ENCODE measurements at regions of chr10 and their contacts with region 1.

Region 1: DNA sequence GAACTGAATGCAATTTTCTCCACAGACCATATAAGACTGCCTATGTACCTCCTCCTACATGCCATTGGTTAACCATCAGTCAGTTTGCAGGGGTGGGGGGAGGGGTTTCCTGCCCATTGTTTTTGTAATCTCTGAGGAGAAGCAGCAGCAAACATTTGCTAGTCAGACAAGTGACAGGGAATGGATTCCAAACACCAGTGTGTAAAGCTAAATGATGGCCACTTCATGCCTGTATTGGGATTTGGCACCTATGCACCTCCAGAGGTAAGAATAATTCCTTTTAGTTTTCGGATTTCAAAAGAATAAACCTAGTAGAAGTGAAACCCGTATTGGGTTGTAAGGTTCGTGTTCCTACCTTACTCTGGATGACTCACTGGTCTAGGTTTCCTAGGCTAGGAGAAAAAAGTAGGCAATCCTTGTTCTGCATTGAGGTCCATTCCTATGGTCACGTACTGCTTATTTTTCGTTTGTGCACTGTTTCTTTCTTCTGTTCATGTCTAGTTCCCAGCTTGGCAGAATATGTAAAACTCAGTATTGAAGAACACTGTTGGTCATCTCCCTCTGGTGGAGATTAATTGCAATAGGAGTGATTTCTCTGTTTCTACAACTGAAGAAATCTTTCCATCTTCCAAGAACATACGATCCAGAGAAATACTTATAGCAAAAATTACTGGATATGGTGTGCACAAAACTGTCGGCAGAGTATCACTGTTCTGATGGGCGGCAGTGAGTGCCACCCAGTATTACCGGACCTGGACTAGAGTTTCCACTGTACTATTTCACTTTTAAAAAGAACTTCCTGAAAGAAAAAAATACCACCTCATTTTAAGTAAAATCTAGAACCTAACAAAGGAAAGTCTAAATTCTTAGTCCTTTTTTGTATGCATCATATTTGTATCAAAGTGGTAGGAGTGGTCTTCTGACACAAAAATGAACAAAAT is at the start of gene AKR1C3:
- DNase-seq: peak; percentile 37 to 74
- H3K4me3 ChIP-seq: peak within 1 kb of the TSS; percentile 97
- H3K27ac ChIP-seq: peak within 1 kb of the TSS; percentile 99
- H3K4me1 ChIP-seq: peaks cover 34% of the 10 kb centered on the region
- H3K27me3 ChIP-seq: no peaks in the 10 kb centered on the region; the same call in 1 of the 2 replicates
- CTCF ChIP-seq: peak; percentile 81
- total RNA-seq, gene AKR1C3: 1,870 and 1,886 TPM in 2 replicates

Region 2: GRCh38 chr10:4770801-4771553 is 323.6 kb before region 1 on chr10:
- CTCF ChIA-PET with region 1: no interaction called
- POLR2A ChIA-PET with region 1: no interaction called
- intact Hi-C with region 1: no loop called
- DNase-seq: peak; percentile 7 to 86
- H3K4me3 ChIP-seq: no peak overlapping the region
- H3K27ac ChIP-seq: peak overlapping the region; percentile 92
- H3K4me1 ChIP-seq: peaks cover 19% of the 10 kb centered on the region
- H3K27me3 ChIP-seq: no peaks in the 10 kb centered on the region
- CTCF ChIP-seq: peak; percentile 67

Region 3: GRCh38 chr10:5071411-5072198 is 22.9 kb before region 1 on chr10:
- CTCF ChIA-PET with region 1: no interaction called
- POLR2A ChIA-PET with region 1: no interaction called
- intact Hi-C with region 1: loop called (anchors 1 kb)
- DNase-seq: peak; percentile 74 to 85
- H3K4me3 ChIP-seq: peak overlapping the region; percentile 38; the same call in 1 of the 2 replicates
- H3K27ac ChIP-seq: peak overlapping the region; percentile 99
- H3K4me1 ChIP-seq: peaks cover 50% of the 10 kb centered on the region
- H3K27me3 ChIP-seq: no peaks in the 10 kb centered on the region
- CTCF ChIP-seq: no peak

Region 4: DNA sequence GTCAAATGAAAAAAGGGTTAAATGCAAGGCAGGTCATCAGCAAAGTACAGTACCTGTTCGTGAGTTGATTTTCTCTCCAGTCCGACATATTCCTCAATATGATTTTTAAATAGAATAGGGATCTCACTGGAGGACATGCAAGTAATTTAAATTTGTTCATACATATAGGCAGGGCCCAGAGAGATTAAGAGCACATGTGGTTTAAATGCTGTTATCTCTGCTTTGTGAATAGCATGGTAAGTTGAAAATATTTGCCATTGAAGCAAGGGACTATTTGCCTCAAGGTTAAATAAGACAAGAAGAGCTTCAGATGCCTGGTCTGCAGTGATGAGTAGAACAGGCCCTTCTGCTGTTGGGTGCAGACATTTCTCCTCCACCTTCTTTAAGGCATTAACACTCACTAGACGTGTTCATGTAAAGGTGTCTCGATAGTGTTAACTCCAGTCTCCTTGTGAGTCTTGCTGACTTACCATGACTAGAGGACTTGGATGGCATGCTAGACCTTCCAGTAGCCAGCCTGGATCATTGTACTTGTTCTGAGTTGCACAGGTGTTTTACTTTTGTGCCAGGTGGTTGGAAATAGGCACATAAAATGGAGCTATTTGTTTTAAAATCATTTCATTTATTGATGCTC is 15.9 kb before region 1 on chr10:
- CTCF ChIA-PET with region 1: no interaction called
- POLR2A ChIA-PET with region 1: interaction called, 8 read pairs
- intact Hi-C with region 1: loop called (anchors 1 kb)
- DNase-seq: peak; percentile 66 to 88
- H3K4me3 ChIP-seq: peak overlapping the region; percentile 29; the same call in 1 of the 2 replicates
- H3K27ac ChIP-seq: peak overlapping the region; percentile 99
- H3K4me1 ChIP-seq: peaks cover 60% of the 10 kb centered on the region
- H3K27me3 ChIP-seq: no peaks in the 10 kb centered on the region
- CTCF ChIP-seq: no peak

Region 5: GRCh38 chr10:5165738-5166137 is 71.2 kb after region 1 on chr10:
- CTCF ChIA-PET with region 1: interaction called, 10 read pairs
- POLR2A ChIA-PET with region 1: no interaction called
- intact Hi-C with region 1: no loop called
- DNase-seq: no peak
- H3K4me3 ChIP-seq: no peak overlapping the region
- H3K27ac ChIP-seq: no peak overlapping the region
- H3K4me1 ChIP-seq: no peaks in the 10 kb centered on the region
- H3K27me3 ChIP-seq: no peaks in the 10 kb centered on the region
- CTCF ChIP-seq: no peak

Region 6: DNA sequence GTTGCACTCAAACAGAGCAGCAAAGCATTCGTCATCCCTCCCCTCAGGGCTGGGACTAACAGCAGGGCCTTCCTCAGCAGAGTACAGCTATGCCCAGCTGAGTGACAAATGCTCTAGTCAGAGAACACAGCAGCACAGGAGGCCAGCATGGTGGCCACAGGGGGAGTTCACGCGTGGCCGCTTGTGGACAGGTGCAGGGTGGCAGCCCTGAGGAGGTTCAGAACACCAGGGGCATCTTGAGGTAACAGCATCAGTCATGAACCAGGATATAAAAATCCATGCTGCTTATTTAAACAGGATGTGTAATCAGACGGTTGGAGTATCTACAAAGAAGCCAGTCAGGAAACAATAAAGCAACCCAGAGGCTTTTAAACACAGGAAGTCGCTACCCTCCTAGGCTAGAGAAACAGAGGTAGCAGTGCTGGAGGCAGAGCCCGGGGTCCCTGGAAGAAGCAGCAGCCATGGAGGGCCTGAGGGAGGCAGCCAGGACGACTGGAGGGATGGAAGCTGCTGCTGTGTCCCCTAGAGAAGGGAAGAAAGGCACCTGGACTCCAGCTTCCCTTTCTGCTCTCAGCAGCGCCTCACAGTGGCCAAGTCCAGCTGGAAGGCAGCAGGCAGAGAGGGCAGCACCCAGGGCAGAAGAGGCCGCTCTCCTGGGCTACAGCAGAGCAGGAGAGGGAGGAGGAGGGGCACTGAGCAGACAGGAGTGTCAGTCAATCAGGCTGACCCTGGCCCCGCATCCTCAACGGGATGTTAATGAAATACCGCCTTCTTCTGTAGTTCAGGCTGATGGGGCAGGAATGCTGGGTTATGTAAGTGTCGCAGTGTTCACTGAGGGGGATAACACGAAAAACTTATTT is 199.4 kb after region 1 on chr10:
- CTCF ChIA-PET with region 1: no interaction called
- POLR2A ChIA-PET with region 1: no interaction called
- intact Hi-C with region 1: no loop called
- DNase-seq: peak in 1 of 2 experiments; percentile 80
- H3K4me3 ChIP-seq: no peak overlapping the region
- H3K27ac ChIP-seq: no peak overlapping the region
- H3K4me1 ChIP-seq: peaks cover 18% of the 10 kb centered on the region
- H3K27me3 ChIP-seq: no peaks in the 10 kb centered on the region
- CTCF ChIP-seq: no peak

Region 7: GRCh38 chr10:5723692-5724091 is 629.2 kb after region 1 on chr10:
- CTCF ChIA-PET with region 1: no interaction called
- POLR2A ChIA-PET with region 1: no interaction called
- intact Hi-C with region 1: no loop called
- DNase-seq: no peak
- H3K4me3 ChIP-seq: no peak overlapping the region
- H3K27ac ChIP-seq: no peak overlapping the region
- H3K4me1 ChIP-seq: no peaks in the 10 kb centered on the region
- H3K27me3 ChIP-seq: no peaks in the 10 kb centered on the region
- CTCF ChIP-seq: no peak

Region 8: DNA sequence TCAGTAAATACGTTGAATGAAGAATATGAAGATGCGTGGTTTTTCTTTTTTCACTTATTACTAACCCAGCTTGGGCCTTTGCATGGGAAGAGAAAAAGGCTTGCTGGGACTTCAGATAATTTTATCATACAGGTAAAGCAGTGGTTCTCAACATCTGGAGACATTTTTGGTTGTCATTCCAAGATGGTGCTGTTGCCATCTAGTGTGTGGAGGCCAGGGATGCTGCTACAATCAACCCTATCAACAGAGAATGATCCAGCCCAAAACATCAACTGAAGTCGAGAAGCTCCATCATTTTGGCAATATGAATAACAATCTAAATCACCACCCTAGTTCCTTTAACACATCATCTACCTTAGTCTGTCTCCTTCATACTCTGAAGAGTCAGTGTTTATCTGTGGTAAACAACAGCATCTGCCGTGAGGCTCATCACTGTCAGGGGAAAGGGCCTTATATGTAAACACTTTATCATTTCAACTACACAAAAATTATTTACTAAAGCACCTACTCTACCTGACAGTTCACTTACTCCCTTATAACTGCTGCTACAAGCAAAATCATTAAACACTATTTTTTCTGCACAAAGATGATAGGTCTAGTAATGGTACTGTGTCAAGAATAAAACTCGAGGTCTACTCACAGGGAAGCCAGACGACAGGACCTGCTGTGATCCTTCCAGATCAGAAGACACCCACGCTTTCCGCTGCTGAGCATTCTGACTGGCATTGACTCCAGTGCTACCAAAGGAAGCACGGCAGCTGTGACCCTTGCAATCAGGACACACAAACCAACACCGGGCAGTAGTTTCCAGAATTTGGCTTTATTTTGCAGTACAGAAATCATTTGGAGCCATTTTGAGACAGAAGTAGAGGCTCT is 670.1 kb after region 1 on chr10:
- CTCF ChIA-PET with region 1: no interaction called
- POLR2A ChIA-PET with region 1: no interaction called
- intact Hi-C with region 1: no loop called
- DNase-seq: no peak
- H3K4me3 ChIP-seq: no peak overlapping the region
- H3K27ac ChIP-seq: no peak overlapping the region
- H3K4me1 ChIP-seq: no peaks in the 10 kb centered on the region
- H3K27me3 ChIP-seq: no peaks in the 10 kb centered on the region
- CTCF ChIP-seq: no peak

Measured in PC-9 (cell line).